Heart left ventricle (tissue), 16 donors: ENCODE measurements at regions of chr3 and their contacts with region 1.

Region 1: GRCh38 chr3:129992781-129993180 is 18.3 kb downstream of the TRH start:
- DNase-seq: no peak
- ATAC-seq: peak in 2 of 4 donors; percentile 41 to 46
- H3K4me3 ChIP-seq: no peak overlapping the region
- H3K27ac ChIP-seq: no peak overlapping the region
- H3K4me1 ChIP-seq: no peaks in the 10 kb centered on the region
- H3K27me3 ChIP-seq: peaks cover 0 to 12% (median 0%) of the 10 kb centered on the region in 9 donors
- CTCF ChIP-seq: peak in 3 of 12 donors; percentile 12 to 25 (median 18)
- POLR2A ChIP-seq: no peak

Region 2: DNA sequence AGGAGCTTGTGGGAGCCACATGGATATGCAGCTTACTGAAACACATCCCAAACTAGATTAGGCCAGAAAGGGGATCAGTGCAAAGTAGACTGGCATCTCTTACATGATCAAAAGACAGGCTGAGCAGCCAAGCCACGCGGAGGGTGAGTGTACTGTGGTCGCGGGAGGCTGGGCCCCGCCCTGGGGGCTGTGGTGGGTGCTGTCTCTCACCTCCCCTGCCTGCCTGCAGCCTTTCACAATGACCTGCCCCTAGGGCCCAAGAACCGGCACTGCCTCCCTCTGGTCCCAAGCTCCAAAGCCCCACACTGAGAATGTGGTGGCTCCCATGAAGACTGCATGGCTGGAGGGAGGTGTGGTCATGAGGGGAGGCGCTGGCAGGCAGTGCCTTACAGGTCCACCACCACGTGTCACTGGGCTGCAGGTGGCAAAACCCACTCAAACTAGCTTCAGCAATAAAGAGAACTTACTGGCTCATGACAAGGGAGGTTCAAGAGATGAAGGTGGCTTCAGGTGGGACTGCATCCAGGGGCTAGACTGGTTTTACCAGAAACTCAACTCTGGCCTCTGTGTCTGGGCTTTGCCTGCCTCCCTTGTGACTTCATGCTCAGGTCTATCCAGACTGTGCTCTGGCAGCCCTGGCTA is 358.9 kb before region 1 on chr3:
- intact Hi-C with region 1: loop called in 1 of 10 experiments (anchors 10 kb)
- DNase-seq: no peak
- ATAC-seq: no peak
- H3K4me3 ChIP-seq: no peak overlapping the region
- H3K27ac ChIP-seq: no peak overlapping the region
- H3K4me1 ChIP-seq: peaks cover 0 to under 1% (median 0%) of the 10 kb centered on the region in 12 donors
- H3K27me3 ChIP-seq: no peaks in the 10 kb centered on the region
- CTCF ChIP-seq: no peak
- POLR2A ChIP-seq: no peak

Region 3: DNA sequence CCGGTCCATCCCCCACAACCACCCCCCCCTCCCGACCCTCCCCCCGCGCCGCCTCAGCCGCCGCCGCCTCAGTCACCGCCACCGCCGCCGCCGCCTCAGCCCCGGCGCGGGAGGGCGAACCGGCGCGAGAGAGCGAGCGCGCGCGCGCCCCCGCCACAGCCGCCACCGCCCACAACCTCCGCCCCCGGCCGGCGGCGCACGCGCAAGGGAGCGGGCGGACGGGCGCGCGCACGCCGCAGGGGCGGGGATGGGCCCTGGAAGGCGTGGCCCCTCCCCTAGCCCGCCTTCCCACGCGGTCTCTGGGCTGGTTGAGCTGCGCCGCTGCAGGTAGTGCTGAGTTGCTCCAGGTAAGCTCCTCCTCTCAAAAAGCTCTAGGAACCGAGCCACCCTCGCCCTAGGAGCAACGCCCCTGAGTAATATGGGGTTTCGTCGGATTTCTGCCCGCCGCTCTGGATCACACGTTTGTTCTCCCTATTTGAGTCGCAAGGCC is 99.2 kb before region 1 on chr3 and contains the start of gene TMCC1:
- intact Hi-C with region 1: no loop called
- DNase-seq: peak; percentile 84 to 92 (median 90)
- ATAC-seq: peak; percentile 87 to 97 (median 96)
- H3K4me3 ChIP-seq: peak within 1 kb of the TSS; percentile 45 to 99 (median 88)
- H3K27ac ChIP-seq: peak within 1 kb of the TSS; percentile 76 to 96 (median 92)
- H3K4me1 ChIP-seq: peaks cover 0 to 49% (median 37%) of the 10 kb centered on the region in 12 donors
- H3K27me3 ChIP-seq: no peaks in the 10 kb centered on the region
- CTCF ChIP-seq: no peak
- POLR2A ChIP-seq: peak in 1 of 2 donors; percentile 7
- total RNA-seq, gene TMCC1: 17.5 to 38.3 (median 23.2) TPM

Region 4: GRCh38 chr3:129942296-129942695 is 50.5 kb before region 1 on chr3:
- intact Hi-C with region 1: loop called in 6 of 10 experiments (anchors 2 to 10 kb)
- DNase-seq: peak; percentile 43 to 66 (median 57)
- ATAC-seq: peak; percentile 85 to 94 (median 87)
- H3K4me3 ChIP-seq: no peak overlapping the region
- H3K27ac ChIP-seq: no peak overlapping the region
- H3K4me1 ChIP-seq: peaks cover 0 to 3% (median 0%) of the 10 kb centered on the region in 12 donors
- H3K27me3 ChIP-seq: peaks cover 0 to 2% (median 0%) of the 10 kb centered on the region in 9 donors
- CTCF ChIP-seq: peak; percentile 62 to 76 (median 69)
- POLR2A ChIP-seq: no peak

Region 5: DNA sequence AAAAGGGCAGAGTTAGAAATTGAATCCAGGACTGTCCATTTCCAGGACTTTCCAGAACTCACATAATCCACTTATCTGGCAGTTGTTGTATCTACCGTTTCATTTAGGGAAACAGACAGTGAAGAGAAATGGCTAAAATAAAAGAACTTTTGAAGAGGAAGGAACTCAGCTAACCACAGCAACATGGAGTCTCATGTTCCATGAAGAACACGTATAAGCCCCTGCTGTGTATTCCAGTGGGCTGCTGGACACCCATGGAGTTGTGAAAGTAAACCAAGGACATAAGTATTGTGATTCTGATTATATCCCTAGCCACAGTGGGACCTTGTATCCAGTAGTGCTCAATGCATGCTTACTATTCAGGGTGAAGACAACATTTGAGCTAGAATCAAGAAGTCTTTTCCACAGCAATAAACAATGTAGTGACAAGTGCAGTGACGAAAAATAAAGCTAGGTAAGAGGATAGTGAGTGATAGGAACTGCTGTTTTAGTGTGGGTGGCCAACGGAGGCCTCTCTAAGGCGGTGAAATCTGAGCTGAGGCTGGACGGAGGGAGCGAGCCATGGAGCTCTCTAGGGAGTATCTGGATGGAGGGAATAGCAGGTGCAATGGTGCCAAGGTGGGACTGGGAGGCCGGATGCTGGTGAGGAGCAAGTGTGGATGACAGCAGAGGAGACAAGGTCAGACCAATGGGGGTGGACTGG is 45.1 kb before region 1 on chr3:
- intact Hi-C with region 1: loop called in 6 of 10 experiments (anchors 2 to 10 kb)
- DNase-seq: no peak
- ATAC-seq: no peak
- H3K4me3 ChIP-seq: no peak overlapping the region
- H3K27ac ChIP-seq: no peak overlapping the region
- H3K4me1 ChIP-seq: peaks cover 0 to 6% (median 0%) of the 10 kb centered on the region in 12 donors
- H3K27me3 ChIP-seq: peaks cover 0 to 7% (median 0%) of the 10 kb centered on the region in 9 donors
- CTCF ChIP-seq: no peak
- POLR2A ChIP-seq: no peak